ENCODE measurements at regions of chr3 and their contacts with region 1.

Region 1: DNA sequence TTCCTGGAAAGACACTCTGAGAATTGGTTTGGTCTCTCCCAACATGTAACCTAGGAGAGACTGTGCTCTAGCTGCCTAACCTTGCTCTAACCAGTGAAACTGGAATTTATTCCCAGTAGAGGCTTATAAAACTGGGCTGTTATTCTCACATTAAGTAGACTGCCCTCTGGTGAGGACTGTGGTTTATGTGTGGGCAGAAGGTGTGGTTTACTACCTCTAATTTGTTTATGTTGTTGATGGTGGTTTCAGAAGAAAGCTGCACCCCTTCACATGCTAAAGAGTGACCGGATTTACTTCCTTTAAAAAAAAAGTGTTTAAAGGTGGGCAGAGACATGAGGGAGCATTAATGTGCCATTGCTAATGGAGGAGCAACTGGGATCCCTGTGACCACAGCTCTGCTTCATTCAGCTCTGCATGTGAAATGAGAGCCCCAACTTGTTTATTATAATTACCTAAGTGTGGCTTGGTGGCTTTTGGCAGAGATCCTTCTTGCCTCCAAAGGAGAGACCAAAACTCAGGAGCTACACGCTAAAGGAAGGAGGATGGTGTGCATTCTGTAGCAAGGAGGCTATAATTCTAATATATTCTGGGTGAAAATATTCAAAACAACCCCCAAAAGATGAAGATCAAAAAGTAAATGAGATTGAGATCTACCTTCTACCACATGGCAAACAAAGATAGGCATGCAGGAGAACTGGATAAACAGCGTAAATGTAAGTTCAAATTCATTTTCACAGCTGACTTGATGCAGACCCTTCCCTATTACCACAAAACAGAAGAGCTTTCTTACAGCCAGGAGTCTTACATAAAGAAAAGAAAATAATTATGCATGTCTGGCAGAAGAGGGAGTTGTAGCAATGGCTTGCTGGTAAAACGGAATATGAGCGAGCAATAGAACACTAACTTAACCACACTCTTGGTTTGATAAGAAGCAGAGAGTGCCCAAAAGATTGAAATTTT is 273.0 kb downstream of the MECOM start:
- DNase-seq: peak; percentile 4
- H3K27ac ChIP-seq: no peak overlapping the region
- CTCF ChIP-seq: no peak

Region 2: GRCh38 chr3:169379496-169380090 is 11.0 kb before region 1 on chr3:
- CTCF ChIA-PET with region 1: interaction called, 10 read pairs
- POLR2A ChIA-PET with region 1: no interaction called
- DNase-seq: no peak
- H3K27ac ChIP-seq: no peak overlapping the region
- CTCF ChIP-seq: no peak

Measured in RWPE1 (cell line).